Activated naive CD4-positive, alpha-beta T cell treated with anti-CD3 and anti-CD28 coated beads for 36 hours (primary cell): ENCODE measurements at regions of chr11 and their contacts with region 1.

Region 1: GRCh38 chr11:81869351-81870065 is 864.2 kb downstream of the FAM181B start:
- DNase-seq: peak; percentile 99
- H3K4me3 Mint-ChIP-seq: peak overlapping the region; percentile 74
- H3K27ac Mint-ChIP-seq: peak overlapping the region; percentile 92
- H3K4me1 Mint-ChIP-seq: peaks cover 46% of the 10 kb centered on the region
- H3K27me3 Mint-ChIP-seq: no peaks in the 10 kb centered on the region

Region 2: GRCh38 chr11:81707881-81708280 is 161.6 kb before region 1 on chr11:
- CTCF ChIA-PET with region 1: no interaction called
- intact Hi-C with region 1: no loop called
- DNase-seq: peak; percentile 8
- H3K4me3 Mint-ChIP-seq: no peak overlapping the region
- H3K27ac Mint-ChIP-seq: no peak overlapping the region
- H3K4me1 Mint-ChIP-seq: no peaks in the 10 kb centered on the region
- H3K27me3 Mint-ChIP-seq: peaks cover 2% of the 10 kb centered on the region

Region 3: GRCh38 chr11:81804858-81805257 is 64.7 kb before region 1 on chr11:
- CTCF ChIA-PET with region 1: no interaction called
- intact Hi-C with region 1: no loop called
- DNase-seq: no peak
- H3K4me3 Mint-ChIP-seq: no peak overlapping the region
- H3K27ac Mint-ChIP-seq: no peak overlapping the region
- H3K4me1 Mint-ChIP-seq: no peaks in the 10 kb centered on the region
- H3K27me3 Mint-ChIP-seq: no peaks in the 10 kb centered on the region

Region 4: DNA sequence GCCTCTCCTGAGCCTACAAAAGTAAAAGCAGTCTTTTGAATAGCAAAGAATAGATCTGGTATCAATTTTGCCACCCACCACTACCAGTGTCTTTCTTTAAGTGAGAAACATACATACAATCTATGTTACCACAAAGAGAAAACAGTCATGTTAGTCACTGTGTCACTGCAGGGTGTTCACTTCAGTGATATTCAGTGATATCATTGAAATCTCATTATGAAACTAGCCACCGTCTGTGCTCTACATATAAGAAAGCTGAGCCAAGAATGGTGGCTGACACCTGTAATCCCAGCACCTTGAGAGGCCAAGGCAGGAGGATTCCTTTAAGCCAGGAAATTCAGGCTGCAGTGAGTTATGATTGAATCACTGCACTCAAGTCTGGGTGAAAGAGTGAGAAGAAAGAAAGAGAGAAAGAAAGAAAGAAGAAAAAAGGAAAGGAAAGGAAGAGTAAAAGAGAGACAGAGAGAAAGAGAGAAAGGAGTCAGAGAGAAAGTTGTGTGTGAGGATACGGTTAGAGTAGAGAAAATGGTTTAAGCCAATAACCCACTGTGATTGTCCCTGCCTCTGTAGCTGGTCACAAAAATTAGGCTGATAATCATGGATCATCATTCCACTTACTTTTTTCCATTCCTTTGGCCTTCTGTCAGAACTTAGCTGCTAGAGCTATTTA is 17.0 kb after region 1 on chr11:
- CTCF ChIA-PET with region 1: interaction called, 3 read pairs
- intact Hi-C with region 1: loop called (anchors 1 kb)
- DNase-seq: peak; percentile 17
- H3K4me3 Mint-ChIP-seq: no peak overlapping the region
- H3K27ac Mint-ChIP-seq: peak overlapping the region; percentile 26
- H3K4me1 Mint-ChIP-seq: peaks cover 10% of the 10 kb centered on the region
- H3K27me3 Mint-ChIP-seq: no peaks in the 10 kb centered on the region

Region 5: DNA sequence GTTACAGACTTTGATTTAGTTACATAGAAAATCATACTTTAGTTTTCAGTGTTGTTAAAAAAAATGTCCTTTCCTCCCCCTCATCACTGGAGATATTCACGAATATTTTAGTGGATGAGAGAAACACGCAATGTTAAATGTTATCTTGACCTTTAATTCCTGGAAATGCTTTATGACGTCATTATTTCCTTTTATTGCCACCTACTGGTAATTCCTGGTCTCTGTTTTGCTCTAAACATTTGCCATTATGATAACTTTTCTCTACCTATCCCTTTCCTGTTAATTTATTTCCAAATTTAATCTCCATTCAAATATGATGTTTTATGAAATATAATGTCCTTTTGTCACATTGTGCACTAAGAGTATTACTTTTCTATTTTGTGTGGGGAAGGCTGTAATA is 93.5 kb after region 1 on chr11:
- CTCF ChIA-PET with region 1: no interaction called
- intact Hi-C with region 1: loop called (anchors 1 kb)
- DNase-seq: no peak
- H3K4me3 Mint-ChIP-seq: no peak overlapping the region
- H3K27ac Mint-ChIP-seq: no peak overlapping the region
- H3K4me1 Mint-ChIP-seq: peaks cover 20% of the 10 kb centered on the region
- H3K27me3 Mint-ChIP-seq: no peaks in the 10 kb centered on the region

Region 6: DNA sequence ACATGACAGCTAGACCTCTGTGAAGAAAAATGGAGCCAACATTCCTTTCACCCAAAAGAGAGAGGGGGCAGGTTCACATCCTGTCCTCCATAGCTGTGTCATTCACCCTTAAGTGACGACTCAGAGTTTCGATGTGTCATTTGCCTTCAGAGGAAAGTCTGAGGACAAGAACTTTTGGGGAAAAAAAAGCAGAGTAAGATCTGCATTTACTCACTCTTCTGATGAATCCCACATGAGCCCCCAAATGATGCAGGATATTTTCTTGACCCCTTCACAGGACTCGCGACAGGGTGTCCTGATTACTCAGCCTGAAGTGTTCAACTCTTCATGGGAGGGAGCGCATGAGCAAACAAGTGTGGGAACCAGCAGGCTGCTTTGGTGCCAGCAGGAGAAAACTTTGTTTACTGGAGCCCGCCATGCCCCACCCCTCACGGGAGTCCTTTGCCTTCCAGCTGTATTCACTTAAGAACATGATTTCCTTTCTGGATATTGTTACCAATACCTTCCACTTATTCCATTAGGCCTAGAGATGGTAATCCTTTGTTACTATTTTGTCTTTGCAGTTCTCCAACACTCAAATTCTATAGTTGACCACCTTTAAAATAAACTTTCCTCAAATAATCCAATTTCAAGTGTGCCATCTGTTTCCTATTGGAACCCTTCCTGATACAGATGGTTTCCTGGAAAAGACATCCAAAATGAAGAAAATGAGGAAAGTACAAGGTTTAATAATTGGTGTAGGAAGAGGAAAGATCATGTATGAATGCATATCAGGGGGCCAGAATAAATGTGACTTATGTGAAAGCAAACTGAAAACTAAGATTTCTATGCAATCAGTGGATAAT is 134.4 kb after region 1 on chr11:
- CTCF ChIA-PET with region 1: no interaction called
- intact Hi-C with region 1: loop called (anchors 1 kb)
- DNase-seq: peak; percentile 30
- H3K4me3 Mint-ChIP-seq: no peak overlapping the region
- H3K27ac Mint-ChIP-seq: peak overlapping the region; percentile 44
- H3K4me1 Mint-ChIP-seq: peaks cover 25% of the 10 kb centered on the region
- H3K27me3 Mint-ChIP-seq: peaks cover 2% of the 10 kb centered on the region

Region 7: GRCh38 chr11:82959987-82960778 is 1090.7 kb after region 1 on chr11:
- CTCF ChIA-PET with region 1: no interaction called
- intact Hi-C with region 1: loop called (anchors 1 kb)
- DNase-seq: peak; percentile 55
- H3K4me3 Mint-ChIP-seq: peak overlapping the region; percentile 21
- H3K27ac Mint-ChIP-seq: peak overlapping the region; percentile 68
- H3K4me1 Mint-ChIP-seq: peaks cover 82% of the 10 kb centered on the region
- H3K27me3 Mint-ChIP-seq: no peaks in the 10 kb centered on the region